ENCODE measurements at regions of chr2 and their contacts with region 1.

Region 1: DNA sequence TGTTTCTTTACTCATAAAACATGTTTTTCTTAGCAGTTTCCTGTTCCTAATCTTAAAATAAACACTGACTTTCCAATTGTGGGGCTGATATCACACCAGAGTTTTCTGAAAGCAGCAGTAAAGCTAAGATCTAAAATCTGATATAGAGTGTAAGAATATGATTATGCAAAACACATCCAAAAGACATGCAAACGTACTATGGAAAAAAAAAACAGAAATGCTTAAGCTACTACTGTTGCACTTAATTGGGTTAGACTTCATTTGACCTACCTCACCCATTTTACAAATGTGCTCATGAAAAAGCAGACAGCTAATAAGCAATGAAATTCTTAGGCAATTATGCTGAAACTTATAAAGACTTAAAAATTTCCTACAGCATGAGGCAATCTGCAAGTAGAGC is 10.5 kb downstream of the CYTIP start:
- DNase-seq: no peak
- ATAC-seq: peak; percentile 28 to 43 (median 34)
- H3K4me3 ChIP-seq: peak overlapping the region in 1 of 2 donors; percentile 87
- H3K4me3 Mint-ChIP-seq: peak overlapping the region; percentile 92 to 97 (median 96)
- H3K27ac ChIP-seq: peak overlapping the region; percentile 90
- H3K27ac Mint-ChIP-seq: peak overlapping the region; percentile 93 to 94
- H3K4me1 ChIP-seq: peaks cover 32 to 61% of the 10 kb centered on the region in 2 experiments
- H3K4me1 Mint-ChIP-seq: peaks cover 78 to 97% (median 89%) of the 10 kb centered on the region in 3 donors
- H3K27me3 ChIP-seq: no peaks in the 10 kb centered on the region
- H3K27me3 Mint-ChIP-seq: no peaks in the 10 kb centered on the region

Region 2: DNA sequence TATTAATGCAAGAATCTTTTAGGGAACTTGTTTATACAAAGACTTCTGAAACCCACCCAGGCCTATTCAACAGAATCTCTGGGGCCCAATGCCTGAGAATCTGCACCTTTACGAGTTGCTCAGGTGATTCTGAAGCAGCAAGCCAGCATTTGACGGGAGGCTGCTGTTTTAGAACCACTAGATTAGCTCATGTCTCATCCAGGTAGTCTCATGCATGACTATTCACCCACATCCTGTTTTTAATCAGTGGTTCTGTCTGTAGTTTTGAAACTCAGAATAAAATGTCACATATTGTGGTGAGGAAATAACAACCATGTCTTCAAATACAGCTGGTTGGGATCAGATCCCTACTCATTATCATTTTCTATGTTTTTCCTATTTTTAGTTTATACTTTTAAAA is 29.0 kb before region 1 on chr2:
- CTCF ChIA-PET with region 1: interaction called in 1 of 2 experiments, 6 read pairs
- POLR2A ChIA-PET with region 1: interaction called, 4 to 49 read pairs
- DNase-seq: peak; percentile 33 to 89 (median 69)
- ATAC-seq: peak; percentile 92 to 97 (median 94)
- H3K4me3 ChIP-seq: no peak overlapping the region
- H3K4me3 Mint-ChIP-seq: peak overlapping the region; percentile 14 to 67 (median 59)
- H3K27ac ChIP-seq: peak overlapping the region; percentile 97
- H3K27ac Mint-ChIP-seq: peak overlapping the region; percentile 99 to 100
- H3K4me1 ChIP-seq: peaks cover 32 to 36% of the 10 kb centered on the region in 2 experiments
- H3K4me1 Mint-ChIP-seq: peaks cover 68 to 81% (median 73%) of the 10 kb centered on the region in 3 donors
- H3K27me3 ChIP-seq: no peaks in the 10 kb centered on the region
- H3K27me3 Mint-ChIP-seq: no peaks in the 10 kb centered on the region

Region 3: GRCh38 chr2:157413326-157414035 is 19.9 kb before region 1 on chr2:
- CTCF ChIA-PET with region 1: interaction called, 4 to 16 read pairs
- POLR2A ChIA-PET with region 1: interaction called, 28 to 216 read pairs
- DNase-seq: peak in 32 of 35 experiments; percentile 37 to 83 (median 63)
- ATAC-seq: peak; percentile 81 to 88 (median 85)
- H3K4me3 ChIP-seq: no peak overlapping the region
- H3K4me3 Mint-ChIP-seq: peak overlapping the region; percentile 47 to 64 (median 54)
- H3K27ac ChIP-seq: peak overlapping the region; percentile 91
- H3K27ac Mint-ChIP-seq: peak overlapping the region; percentile 96 to 99
- H3K4me1 ChIP-seq: peaks cover 39 to 91% of the 10 kb centered on the region in 2 experiments
- H3K4me1 Mint-ChIP-seq: peaks cover 89 to 93% (median 93%) of the 10 kb centered on the region in 3 donors
- H3K27me3 ChIP-seq: no peaks in the 10 kb centered on the region
- H3K27me3 Mint-ChIP-seq: no peaks in the 10 kb centered on the region

Region 4: GRCh38 chr2:157420771-157421323 is 12.5 kb before region 1 on chr2:
- CTCF ChIA-PET with region 1: interaction called, 6 to 16 read pairs
- POLR2A ChIA-PET with region 1: interaction called, 28 to 216 read pairs
- DNase-seq: peak in 1 of 35 experiments; percentile 53
- ATAC-seq: peak in 2 of 4 experiments; percentile 2 to 9
- H3K4me3 ChIP-seq: no peak overlapping the region
- H3K4me3 Mint-ChIP-seq: peak overlapping the region in 2 of 3 donors; percentile 24 to 60
- H3K27ac ChIP-seq: peak overlapping the region; percentile 91
- H3K27ac Mint-ChIP-seq: peak overlapping the region; percentile 90 to 93
- H3K4me1 ChIP-seq: peaks cover 48 to 77% of the 10 kb centered on the region in 2 experiments
- H3K4me1 Mint-ChIP-seq: peaks cover 72 to 80% (median 74%) of the 10 kb centered on the region in 3 donors
- H3K27me3 ChIP-seq: no peaks in the 10 kb centered on the region
- H3K27me3 Mint-ChIP-seq: no peaks in the 10 kb centered on the region

Measured in T-cell (primary cell).